Activated naive CD4-positive, alpha-beta T cell treated with anti-CD3 and anti-CD28 coated beads for 36 hours (primary cell): ENCODE measurements at regions of chr15 and their contacts with region 1.

Region 1: GRCh38 chr15:39782441-39783138 is at the start of gene FSIP1:
- DNase-seq: peak; percentile 98
- H3K4me3 Mint-ChIP-seq: peak within 1 kb of the TSS; percentile 77
- H3K27ac Mint-ChIP-seq: peak within 1 kb of the TSS; percentile 64
- H3K4me1 Mint-ChIP-seq: peaks cover 43% of the 10 kb centered on the region
- H3K27me3 Mint-ChIP-seq: no peaks in the 10 kb centered on the region
- total RNA-seq, gene FSIP1: 0.21 to 0.27 TPM

Region 2: GRCh38 chr15:39623529-39623931 is 159.1 kb before region 1 on chr15:
- CTCF ChIA-PET with region 1: interaction called, 4 read pairs
- intact Hi-C with region 1: loop called (anchors 2 kb)
- DNase-seq: peak; percentile 56
- H3K4me3 Mint-ChIP-seq: no peak overlapping the region
- H3K27ac Mint-ChIP-seq: peak overlapping the region; percentile 6
- H3K4me1 Mint-ChIP-seq: peaks cover 34% of the 10 kb centered on the region
- H3K27me3 Mint-ChIP-seq: peaks cover 7% of the 10 kb centered on the region

Region 3: DNA sequence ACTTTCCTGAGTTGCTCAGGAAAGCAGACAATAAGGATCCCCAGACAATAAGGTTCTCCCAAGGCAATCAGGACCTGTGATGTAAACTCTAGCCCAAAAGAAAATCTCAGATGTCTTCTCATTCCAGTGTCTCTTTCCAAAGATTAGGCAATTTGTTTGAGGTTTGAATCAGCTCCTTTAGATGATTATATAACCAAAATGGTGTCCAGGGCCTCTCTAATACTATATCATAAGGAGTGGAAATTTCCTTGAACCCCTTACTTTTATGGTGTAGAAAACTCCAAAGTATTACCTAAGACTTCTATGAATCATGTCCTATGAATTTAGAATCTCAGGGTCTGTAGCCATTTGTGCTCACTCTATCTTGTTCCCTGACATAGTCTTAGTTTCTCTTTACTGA is 71.6 kb after region 1 on chr15:
- CTCF ChIA-PET with region 1: no interaction called
- intact Hi-C with region 1: no loop called
- DNase-seq: no peak
- H3K4me3 Mint-ChIP-seq: no peak overlapping the region
- H3K27ac Mint-ChIP-seq: no peak overlapping the region
- H3K4me1 Mint-ChIP-seq: no peaks in the 10 kb centered on the region
- H3K27me3 Mint-ChIP-seq: no peaks in the 10 kb centered on the region

Region 4: DNA sequence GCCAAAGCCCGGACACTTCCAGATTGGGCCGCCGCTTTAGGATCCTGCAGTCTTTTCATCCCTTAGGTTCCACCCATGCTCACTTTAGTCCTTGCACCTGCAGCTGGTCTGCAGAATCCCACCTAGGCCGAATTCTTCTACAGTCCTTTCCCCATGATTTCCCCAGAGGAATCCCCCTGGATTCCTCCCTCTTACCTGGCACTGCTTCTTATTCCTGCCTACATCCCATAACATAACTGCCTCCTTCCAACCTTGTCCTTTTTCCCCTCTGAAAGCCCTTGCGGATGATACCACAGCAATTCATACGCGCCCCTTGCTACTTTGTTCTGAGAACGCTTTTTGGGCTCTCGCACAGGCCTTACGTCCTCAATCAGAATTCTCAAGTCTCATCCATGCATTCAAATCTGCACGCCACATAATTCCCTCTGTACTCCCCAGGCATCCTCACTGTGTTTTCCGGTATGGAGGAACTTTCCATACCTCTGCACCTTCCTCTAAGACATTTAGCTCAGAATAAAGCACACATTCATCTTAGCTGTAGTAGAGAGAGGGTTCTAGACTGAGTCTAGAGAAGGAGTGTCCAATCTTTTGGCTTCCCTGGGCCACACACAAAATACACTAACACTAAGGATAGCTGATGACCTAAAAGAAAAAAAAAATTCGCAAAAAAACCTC is 151.9 kb after region 1 on chr15:
- CTCF ChIA-PET with region 1: interaction called, 3 read pairs
- intact Hi-C with region 1: loop called (anchors 1 kb)
- DNase-seq: peak; percentile 8
- H3K4me3 Mint-ChIP-seq: peak overlapping the region; percentile 89
- H3K27ac Mint-ChIP-seq: peak overlapping the region; percentile 52
- H3K4me1 Mint-ChIP-seq: peaks cover 27% of the 10 kb centered on the region
- H3K27me3 Mint-ChIP-seq: no peaks in the 10 kb centered on the region

Region 5: DNA sequence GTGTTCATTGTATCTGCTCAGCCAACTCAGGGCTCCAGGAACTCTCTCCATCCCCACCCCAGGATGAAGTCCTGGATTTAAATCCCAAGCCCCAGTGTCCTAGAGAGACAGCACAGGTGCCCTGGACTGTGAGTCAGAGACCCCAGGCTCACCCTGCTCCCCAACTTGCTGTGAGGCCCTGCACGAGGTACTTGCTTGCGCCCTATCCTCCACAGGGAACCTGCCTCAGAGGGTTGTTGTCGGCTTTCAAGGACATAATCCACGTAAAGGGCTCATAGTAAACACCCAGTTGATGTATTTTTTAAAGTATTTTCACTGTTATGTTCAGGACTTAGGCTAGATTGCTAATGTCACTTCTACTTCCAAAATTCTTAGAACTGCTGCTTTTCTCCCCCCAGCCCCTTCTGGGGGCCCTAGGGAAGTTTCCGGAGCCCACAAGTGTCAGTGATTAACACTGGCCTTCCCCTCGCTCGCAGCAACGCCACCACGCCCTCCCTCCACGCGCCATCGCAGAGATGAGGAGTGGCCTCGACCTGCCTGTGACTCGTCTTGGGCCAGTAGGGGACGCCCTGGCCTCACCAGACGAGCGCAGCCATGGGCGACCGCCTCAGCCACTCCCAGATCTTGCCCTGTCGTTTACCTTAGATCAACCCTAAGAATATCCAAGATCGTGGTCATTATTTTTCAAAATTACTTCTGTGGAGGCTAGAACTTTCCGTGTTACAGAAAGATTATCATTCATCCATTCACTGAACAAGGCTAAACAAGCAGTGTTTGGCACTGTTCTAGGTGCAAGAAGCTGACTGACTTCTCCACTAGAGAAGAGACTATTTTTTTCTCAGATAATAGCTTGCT is 262.4 kb after region 1 on chr15:
- CTCF ChIA-PET with region 1: interaction called, 7 read pairs
- intact Hi-C with region 1: loop called (anchors 2 kb)
- DNase-seq: peak; percentile 96
- H3K4me3 Mint-ChIP-seq: peak overlapping the region; percentile 45
- H3K27ac Mint-ChIP-seq: peak overlapping the region; percentile 50
- H3K4me1 Mint-ChIP-seq: peaks cover 70% of the 10 kb centered on the region
- H3K27me3 Mint-ChIP-seq: no peaks in the 10 kb centered on the region

Region 6: DNA sequence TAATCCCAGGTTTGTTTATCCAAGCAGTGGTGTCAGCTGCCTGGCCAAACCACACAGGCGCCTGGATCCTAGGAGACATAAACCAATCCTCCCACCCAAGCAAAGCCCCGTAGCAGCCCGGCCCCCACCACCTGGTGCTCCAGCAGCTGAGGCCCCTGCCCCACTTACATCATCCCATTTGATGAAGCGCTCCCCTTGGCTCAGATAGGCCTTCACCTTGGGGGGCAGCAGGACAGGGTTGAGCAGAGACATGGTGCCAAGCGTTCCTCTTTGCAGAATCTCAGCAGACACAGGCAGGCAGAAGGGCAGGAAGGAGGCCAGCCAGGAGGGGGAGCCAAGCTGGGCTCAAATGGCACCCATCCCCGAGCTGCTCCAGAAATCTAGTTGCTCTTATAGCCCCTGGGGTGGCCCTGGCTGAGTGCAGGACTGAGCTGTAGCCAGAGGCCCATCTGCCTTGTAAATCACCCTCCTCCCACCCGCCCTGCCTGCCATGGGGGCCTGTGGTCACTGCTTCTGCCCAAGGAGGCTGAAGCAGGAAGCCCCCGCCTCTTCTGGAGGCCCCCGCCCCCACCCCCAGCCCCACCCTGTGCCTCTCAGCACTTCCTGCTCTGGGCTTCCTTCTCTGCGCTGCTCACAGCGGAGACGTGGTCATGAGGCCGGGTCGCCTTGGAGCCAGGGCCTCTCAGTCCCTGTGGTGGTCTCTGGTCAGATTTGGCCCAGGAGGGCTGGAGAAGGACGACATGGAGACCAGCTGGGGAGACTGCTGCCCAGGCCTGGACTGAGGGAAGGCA is 525.0 kb after region 1 on chr15 and contains the start of gene PLCB2:
- CTCF ChIA-PET with region 1: no interaction called
- intact Hi-C with region 1: loop called (anchors 1 kb)
- DNase-seq: peak; percentile 77
- H3K4me3 Mint-ChIP-seq: peak within 1 kb of the TSS; percentile 97
- H3K27ac Mint-ChIP-seq: peak within 1 kb of the TSS; percentile 96
- H3K4me1 Mint-ChIP-seq: peaks cover 29% of the 10 kb centered on the region
- H3K27me3 Mint-ChIP-seq: no peaks in the 10 kb centered on the region
- total RNA-seq, gene PLCB2: 55.0 to 56.7 TPM